ENCODE measurements at regions of chr12 and their contacts with region 1.

Region 1: DNA sequence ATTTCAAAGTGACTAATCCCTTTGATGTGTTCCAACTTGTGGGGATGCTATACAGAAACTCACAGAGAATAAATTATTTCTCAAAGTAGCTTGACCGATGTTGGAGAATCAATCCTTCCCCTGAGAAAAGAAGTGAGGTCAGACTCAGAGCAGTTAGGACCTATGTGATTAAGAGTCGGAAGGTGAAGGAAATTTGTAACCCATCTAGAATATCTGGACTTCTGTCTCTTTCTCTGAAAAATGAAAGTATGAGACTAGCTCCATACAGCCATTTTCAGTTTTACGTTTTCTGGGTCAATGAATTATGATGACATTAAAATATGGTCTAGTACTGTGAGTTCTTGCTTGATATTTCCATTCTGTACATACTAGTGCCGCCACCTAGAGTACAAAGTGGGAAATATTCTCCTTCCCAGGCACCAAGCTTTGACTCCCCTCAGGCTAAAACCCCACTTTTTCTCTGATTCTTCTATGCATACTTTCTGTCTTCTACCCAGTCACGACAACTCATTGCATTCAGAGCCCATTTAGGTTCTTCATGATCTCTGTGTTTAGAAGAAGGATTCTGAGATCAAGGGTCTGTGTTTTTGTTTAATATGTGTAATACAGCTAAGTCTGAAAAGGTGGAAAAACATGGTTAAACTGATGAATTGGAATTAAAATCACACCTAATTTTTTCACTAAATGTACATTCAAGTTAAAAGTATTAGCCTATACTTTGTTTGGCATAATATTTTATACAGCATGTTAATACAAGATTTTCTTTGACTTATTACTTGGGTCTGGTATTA is 6.9 kb upstream of the NTS start:
- DNase-seq: peak; percentile 51 to 70
- ATAC-seq: peak; percentile 64 to 95; a peak in 5 of 6 replicates
- H3K4me3 ChIP-seq: no peak overlapping the region
- H3K27ac ChIP-seq: peak overlapping the region in 1 of 2 experiments; percentile 18; a peak in 1 of 6 replicates
- H3K4me1 ChIP-seq: no peaks in the 10 kb centered on the region
- CTCF ChIP-seq: peak; percentile 82
- EP300 ChIP-seq: no peak
- POLR2A ChIP-seq: no peak
- RAD21 ChIP-seq: peak; percentile 82 to 87

Region 2: DNA sequence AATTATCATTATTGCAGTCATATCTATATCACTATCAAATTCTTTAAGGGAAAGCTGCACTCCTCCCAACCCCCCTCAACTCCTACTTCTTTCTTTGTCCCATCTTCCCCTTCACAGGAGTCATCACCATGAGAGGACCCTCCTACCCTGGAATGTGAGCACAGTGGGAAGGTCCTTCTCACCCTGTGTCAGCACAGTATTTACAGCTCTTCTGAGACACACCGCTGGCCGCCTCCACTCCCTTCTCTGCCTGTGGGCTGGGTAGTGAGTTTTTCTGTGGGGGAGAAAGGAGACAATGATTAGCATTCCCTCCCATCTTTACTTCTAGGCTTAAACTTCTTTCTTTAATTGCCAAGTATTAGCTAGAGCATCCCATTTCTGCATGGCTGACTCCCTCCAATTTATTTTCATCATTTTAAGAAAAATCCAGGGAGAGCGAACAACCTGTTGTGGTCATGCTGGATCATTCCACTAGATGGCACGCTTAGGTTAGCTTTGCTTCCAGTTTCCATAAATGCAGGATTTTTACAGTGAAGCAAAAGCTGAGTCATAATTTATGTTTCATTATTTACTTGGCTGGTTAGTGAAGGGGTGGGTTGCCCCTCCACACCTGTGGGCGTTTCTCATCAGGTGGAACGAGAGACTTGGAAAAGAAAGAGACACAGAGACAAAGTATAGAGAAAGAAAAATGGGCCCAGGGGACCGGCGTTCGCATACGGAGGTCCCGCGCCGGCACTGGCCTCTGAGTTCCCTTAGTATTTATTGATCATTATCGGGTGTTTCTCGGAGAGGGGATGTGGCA is 398.6 kb before region 1 on chr12:
- CTCF ChIA-PET with region 1: interaction called, 29 read pairs
- POLR2A ChIA-PET with region 1: no interaction called
- DNase-seq: peak; percentile 28 to 78
- ATAC-seq: peak; percentile 82 to 94
- H3K4me3 ChIP-seq: peak overlapping the region; percentile 6; the same call in 1 of the 3 replicates
- H3K27ac ChIP-seq: peak overlapping the region; percentile 53 to 73
- H3K4me1 ChIP-seq: 0 out of 3 replicates have a peak, but pooled peaks cover 5% of the 10 kb centered on the region
- CTCF ChIP-seq: peak; percentile 81
- EP300 ChIP-seq: no peak
- POLR2A ChIP-seq: no peak
- RAD21 ChIP-seq: peak; percentile 83 to 94

Region 3: GRCh38 chr12:85484387-85484786 is 382.8 kb before region 1 on chr12:
- CTCF ChIA-PET with region 1: interaction called, 11 read pairs
- POLR2A ChIA-PET with region 1: no interaction called
- DNase-seq: no peak
- ATAC-seq: no peak
- H3K4me3 ChIP-seq: no peak overlapping the region
- H3K27ac ChIP-seq: no peak overlapping the region
- H3K4me1 ChIP-seq: no peaks in the 10 kb centered on the region
- CTCF ChIP-seq: no peak
- EP300 ChIP-seq: no peak
- POLR2A ChIP-seq: no peak
- RAD21 ChIP-seq: no peak

Region 4: GRCh38 chr12:85575120-85576096 is 291.8 kb before region 1 on chr12:
- CTCF ChIA-PET with region 1: interaction called, 85 read pairs
- POLR2A ChIA-PET with region 1: no interaction called
- DNase-seq: peak; percentile 51 to 75
- ATAC-seq: peak; percentile 96 to 100
- H3K4me3 ChIP-seq: no peak overlapping the region
- H3K27ac ChIP-seq: peak overlapping the region in 1 of 2 experiments; percentile 19; a peak in 1 of 6 replicates
- H3K4me1 ChIP-seq: no peaks in the 10 kb centered on the region
- CTCF ChIP-seq: peak; percentile 74
- EP300 ChIP-seq: no peak
- POLR2A ChIP-seq: no peak
- RAD21 ChIP-seq: peak; percentile 76 to 82

Region 5: GRCh38 chr12:85733221-85733840 is 133.8 kb before region 1 on chr12:
- CTCF ChIA-PET with region 1: no interaction called
- POLR2A ChIA-PET with region 1: no interaction called
- DNase-seq: no peak
- ATAC-seq: no peak
- H3K4me3 ChIP-seq: no peak overlapping the region
- H3K27ac ChIP-seq: no peak overlapping the region
- H3K4me1 ChIP-seq: no peaks in the 10 kb centered on the region
- CTCF ChIP-seq: no peak
- EP300 ChIP-seq: no peak
- POLR2A ChIP-seq: no peak
- RAD21 ChIP-seq: no peak

Region 6: GRCh38 chr12:85843606-85844285 is 23.4 kb before region 1 on chr12:
- CTCF ChIA-PET with region 1: interaction called, 15 read pairs
- POLR2A ChIA-PET with region 1: no interaction called
- DNase-seq: no peak
- ATAC-seq: no peak; a peak in 2 of 6 replicates
- H3K4me3 ChIP-seq: no peak overlapping the region
- H3K27ac ChIP-seq: no peak overlapping the region
- H3K4me1 ChIP-seq: no peaks in the 10 kb centered on the region
- CTCF ChIP-seq: no peak
- EP300 ChIP-seq: no peak
- POLR2A ChIP-seq: no peak
- RAD21 ChIP-seq: no peak

Region 7: DNA sequence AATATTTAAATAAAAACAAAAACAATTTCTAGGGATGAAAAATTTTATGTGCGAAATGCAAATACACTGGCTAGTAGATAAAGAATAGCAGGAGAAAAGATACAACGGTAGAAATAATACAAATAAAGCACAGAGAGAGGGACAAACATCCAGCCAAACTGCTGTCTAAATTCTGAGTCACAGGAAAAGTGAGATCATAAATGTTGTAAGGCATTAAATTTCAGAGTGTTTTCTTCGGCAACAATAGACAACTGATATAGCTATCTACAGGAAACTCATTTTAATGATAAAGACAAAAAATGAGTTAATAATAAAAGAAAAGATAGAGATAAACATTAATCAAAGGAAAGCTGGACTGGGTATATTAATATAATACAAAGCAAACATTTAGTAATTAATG is 129.1 kb after region 1 on chr12:
- CTCF ChIA-PET with region 1: no interaction called
- POLR2A ChIA-PET with region 1: no interaction called
- DNase-seq: no peak
- ATAC-seq: no peak
- H3K4me3 ChIP-seq: no peak overlapping the region
- H3K27ac ChIP-seq: no peak overlapping the region
- H3K4me1 ChIP-seq: no peaks in the 10 kb centered on the region
- CTCF ChIP-seq: no peak
- EP300 ChIP-seq: no peak
- POLR2A ChIP-seq: no peak
- RAD21 ChIP-seq: no peak